OCI-LY7 (cell line): ENCODE measurements at regions of chr12 and their contacts with region 1.

Region 1: DNA sequence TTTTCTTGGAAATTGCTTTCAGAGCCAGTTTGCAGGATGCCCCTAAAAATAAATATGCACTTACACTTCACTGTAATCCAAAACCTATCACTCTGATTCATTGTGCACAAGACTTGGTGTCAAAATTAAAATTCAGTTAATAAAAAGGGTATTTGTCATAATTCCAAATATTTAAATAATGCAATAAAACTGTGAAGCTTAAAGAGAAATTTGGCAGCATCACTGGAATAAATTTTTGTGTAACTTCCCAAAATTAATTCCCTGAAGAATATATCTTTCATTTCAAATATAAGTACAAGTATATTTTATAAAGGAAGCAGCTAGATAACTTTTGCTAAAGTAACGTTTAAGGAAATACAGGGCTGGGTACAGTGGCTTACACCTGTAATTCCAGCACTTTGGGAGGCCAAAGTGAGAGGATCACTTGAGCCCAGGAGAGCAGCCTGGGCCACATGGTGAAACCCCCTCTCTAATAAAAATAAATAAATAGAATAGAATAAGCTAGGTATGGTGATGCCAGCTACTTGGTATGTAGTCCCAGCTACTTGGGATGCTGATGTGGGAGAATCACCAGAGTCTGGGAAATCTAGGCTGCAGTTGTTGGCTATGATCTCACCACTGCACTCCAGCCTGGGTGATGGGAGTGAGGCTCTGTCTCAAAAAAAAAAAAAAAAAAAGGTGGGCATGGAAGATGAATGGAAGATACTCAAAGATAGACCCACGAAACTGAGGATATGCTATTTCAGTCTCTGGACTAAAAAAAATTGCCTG is 233.8 kb downstream of the FBXL14 start:
- DNase-seq: no peak
- H3K4me3 ChIP-seq: no peak overlapping the region
- H3K27ac ChIP-seq: no peak overlapping the region
- H3K4me1 ChIP-seq: no peaks in the 10 kb centered on the region
- CTCF ChIP-seq: no peak

Region 2: DNA sequence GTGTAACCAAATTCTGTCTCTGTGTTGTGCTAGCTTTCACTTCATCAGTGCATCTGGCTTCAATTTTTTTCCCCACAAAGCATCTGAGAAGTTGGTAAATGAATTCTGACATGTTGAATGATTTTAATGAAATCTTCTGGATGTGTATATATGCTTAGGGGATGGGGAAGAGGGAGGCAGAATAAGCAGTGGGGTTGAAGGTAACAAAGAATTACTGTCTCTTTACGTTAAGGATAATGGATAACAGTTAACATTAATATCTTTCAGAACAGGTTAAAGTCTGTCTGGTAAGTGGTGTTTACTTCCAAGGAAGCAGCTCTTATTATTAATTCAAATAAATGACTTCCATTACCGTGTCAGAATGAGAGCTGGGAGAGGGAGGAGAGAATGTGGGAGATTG is 107.9 kb before region 1 on chr12:
- CTCF ChIA-PET with region 1: no interaction called
- POLR2A ChIA-PET with region 1: interaction called, 10 read pairs
- intact Hi-C with region 1: no loop called
- DNase-seq: no peak
- H3K4me3 ChIP-seq: no peak overlapping the region
- H3K27ac ChIP-seq: no peak overlapping the region
- H3K4me1 ChIP-seq: no peaks in the 10 kb centered on the region
- CTCF ChIP-seq: no peak